IMR-90 (cell line): ENCODE measurements at regions of chr12 and their contacts with region 1.

Region 1: DNA sequence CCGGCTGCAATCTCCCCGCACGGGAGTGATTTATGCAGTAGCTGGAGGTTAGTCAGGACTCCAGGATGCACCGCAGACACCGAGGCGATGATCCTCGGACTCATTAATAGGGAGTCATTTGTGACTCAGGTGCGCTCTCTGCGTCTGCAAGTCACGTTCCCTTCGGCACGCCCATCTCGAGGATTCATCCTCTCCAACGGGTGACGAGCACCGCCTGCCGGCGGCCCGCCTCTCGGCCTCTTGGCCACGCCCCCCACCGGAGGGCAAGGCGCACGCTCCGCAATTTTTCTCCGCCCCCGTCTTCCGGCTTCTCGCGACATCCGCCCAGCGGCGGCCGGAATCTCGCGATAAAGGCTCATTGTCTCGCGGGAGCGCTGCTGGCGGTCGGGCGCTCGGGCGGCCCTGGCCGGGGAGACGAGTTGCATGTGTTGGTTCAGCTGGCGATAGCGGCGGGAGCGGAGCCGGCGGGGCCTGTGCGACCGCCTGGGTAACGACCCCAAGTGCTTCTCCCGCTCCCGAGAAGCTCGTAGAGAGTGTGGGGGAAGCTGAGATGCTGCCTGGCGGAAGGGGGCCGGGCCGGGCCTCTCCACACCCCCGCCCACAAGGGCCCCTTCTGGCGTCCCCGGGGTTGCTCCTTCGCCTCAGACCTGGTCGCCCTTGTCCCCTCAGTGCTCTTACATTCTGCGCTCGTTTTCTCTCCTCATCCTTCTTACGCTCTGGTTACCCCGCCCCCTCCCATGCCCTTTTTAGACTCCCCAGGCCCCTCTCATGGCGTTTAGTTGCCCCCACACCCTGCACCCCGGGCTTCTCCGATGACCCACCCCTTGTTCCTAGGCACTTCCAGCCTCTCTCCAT is at the start of gene DENR:
- DNase-seq: peak; percentile 98
- ATAC-seq: peak; percentile 98
- H3K4me3 ChIP-seq: peak within 1 kb of the TSS; percentile 62
- H3K27ac ChIP-seq: peak within 1 kb of the TSS; percentile 83
- H3K4me1 ChIP-seq: peaks cover 6% of the 10 kb centered on the region
- H3K27me3 ChIP-seq: no peaks in the 10 kb centered on the region
- CTCF ChIP-seq: peak; percentile 98
- POLR2A ChIP-seq: peak; percentile 93
- RAD21 ChIP-seq: peak; percentile 96
- total RNA-seq, gene DENR: 8.2 and 32.2 TPM in 2 replicates

Region 2: DNA sequence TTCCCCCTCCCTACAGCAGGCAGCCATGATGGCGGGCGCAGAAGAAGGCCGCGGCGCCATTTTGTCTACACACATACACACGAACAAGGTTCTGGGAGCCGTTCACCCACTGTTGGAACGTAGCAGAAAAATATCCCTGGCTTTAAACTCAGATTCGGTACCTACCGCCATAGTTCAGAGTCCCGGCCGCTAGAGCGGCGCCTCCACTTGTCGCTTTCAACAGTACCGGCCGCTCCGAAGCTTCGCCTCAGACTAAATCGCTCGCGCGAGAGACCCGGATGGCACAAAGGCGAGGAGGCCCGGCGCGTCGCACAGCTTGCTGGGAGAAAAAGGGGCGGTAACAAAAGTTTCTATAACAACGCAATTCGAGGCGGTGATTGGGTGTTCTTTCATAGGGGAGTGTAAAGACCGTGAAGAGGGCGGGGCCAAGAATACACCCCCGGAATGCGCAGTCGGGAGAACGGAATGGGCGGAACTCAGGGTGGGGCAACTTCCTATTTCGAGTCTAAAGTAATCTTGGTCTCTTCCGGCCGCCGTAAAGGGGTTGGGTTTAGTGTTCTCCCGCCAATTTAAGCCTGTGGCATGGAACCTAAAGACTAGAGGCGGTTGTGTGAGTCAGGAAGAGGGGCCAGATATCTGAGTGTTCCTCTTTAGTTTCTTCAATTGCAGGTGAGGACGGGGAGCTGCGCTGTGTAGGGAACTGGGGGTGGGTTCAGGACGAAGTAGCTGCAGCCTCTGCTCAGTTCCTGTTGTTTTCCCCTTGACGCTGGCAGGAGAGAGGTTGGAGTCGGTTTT is 225.8 kb before region 1 on chr12 and contains the starts of genes KNTC1 and RSRC2:
- CTCF ChIA-PET with region 1: no interaction called
- POLR2A ChIA-PET with region 1: no interaction called
- dilution Hi-C with region 1: no loop called
- in situ Hi-C with region 1: no loop called
- intact Hi-C with region 1: loop called (anchors 2 kb)
- DNase-seq: peak; percentile 100
- ATAC-seq: peak; percentile 97
- H3K4me3 ChIP-seq: peak within 1 kb of the TSS; percentile 70
- H3K27ac ChIP-seq: peak within 1 kb of the TSS; percentile 96
- H3K4me1 ChIP-seq: peaks cover 4% of the 10 kb centered on the region
- H3K27me3 ChIP-seq: no peaks in the 10 kb centered on the region
- CTCF ChIP-seq: no peak
- POLR2A ChIP-seq: peak; percentile 99
- RAD21 ChIP-seq: no peak
- total RNA-seq, gene KNTC1: 23.7 and 32.8 TPM in 2 replicates
- total RNA-seq, gene RSRC2: 18.6 and 41.7 TPM in 2 replicates

Region 3: GRCh38 chr12:122635471-122635870 is 117.2 kb before region 1 on chr12:
- CTCF ChIA-PET with region 1: interaction called, 12 read pairs
- POLR2A ChIA-PET with region 1: no interaction called
- dilution Hi-C with region 1: no loop called
- in situ Hi-C with region 1: loop called (anchors 5 kb)
- intact Hi-C with region 1: loop called (anchors 1 kb)
- DNase-seq: no peak
- ATAC-seq: no peak
- H3K4me3 ChIP-seq: no peak overlapping the region
- H3K27ac ChIP-seq: no peak overlapping the region
- H3K4me1 ChIP-seq: no peaks in the 10 kb centered on the region
- H3K27me3 ChIP-seq: no peaks in the 10 kb centered on the region
- CTCF ChIP-seq: no peak
- POLR2A ChIP-seq: no peak
- RAD21 ChIP-seq: no peak